Posterior vena cava (tissue), 2 donors: ENCODE measurements at regions of chr4 and their contacts with region 1.

Region 1: GRCh38 chr4:152806501-152807125 is 26.9 kb downstream of the ARFIP1 start:
- DNase-seq: no peak

Region 2: DNA sequence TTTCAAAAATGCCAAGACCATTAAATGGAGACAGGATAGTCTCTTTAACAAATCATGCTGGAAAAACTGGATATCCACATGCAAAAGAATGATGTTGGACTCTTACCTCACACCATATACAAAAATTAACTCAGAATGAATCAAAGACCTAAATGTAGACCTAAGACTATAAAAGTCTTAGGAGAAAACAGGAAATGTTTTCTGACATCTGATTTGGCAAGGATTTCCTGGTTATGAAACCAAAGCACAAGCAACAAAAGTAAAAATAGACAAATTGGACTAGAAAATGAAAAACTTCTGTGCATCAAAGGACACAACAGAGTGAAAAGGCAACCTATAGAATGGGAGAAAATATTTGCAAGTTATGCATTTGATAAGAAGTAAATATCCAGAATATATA is 10.7 kb after region 1 on chr4:
- intact Hi-C with region 1: loop called in 1 of 2 experiments (anchors 1 kb)
- DNase-seq: no peak